ENCODE measurements at regions of chr7 and their contacts with region 1.

Region 1: GRCh38 chr7:128059143-128059988 is 28.1 kb upstream of the LRRC4 start:
- DNase-seq: peak; percentile 29
- H3K4me3 Mint-ChIP-seq: no peak overlapping the region
- H3K27ac Mint-ChIP-seq: no peak overlapping the region
- H3K4me1 Mint-ChIP-seq: peaks cover 49% of the 10 kb centered on the region
- H3K27me3 Mint-ChIP-seq: no peaks in the 10 kb centered on the region

Region 2: DNA sequence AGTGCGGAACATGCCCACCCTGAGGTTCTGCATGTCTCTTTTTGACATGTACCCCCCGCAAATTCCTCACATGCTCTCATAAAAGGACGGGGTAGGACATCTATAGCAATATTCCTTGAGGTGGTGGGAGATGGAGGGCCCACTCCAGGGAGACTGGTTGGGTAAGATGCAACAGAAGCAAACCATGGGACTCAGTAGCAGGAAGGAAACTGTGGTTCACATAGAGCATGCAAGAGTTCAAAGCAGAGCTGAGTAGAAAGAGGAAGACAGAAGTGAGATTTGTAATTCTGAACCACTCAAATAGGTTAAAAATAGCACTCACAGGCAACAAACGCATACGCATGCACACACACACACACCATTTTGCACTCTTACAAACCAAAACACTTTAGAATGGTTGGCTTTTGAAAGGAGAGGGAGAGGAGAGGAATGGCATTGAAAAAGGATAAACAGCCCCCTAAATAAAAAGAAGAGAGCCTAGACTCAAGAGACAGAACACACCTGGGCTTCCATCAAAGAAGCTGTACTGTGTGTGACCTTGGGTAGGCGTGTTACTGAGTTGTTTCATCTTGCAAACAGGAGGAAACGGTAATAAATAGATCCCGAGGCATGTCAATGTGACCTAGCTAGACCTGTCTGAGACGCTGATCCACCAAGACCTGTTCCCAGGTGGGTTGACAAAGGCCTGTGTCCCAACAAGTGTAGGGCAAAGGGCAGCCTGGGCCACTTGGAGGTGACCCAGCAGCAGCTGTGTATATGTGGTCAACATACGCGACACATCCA is 49.5 kb after region 1 on chr7:
- CTCF ChIA-PET with region 1: interaction called, 3 read pairs
- intact Hi-C with region 1: loop called (anchors 2 kb)
- DNase-seq: peak; percentile 45
- H3K4me3 Mint-ChIP-seq: no peak overlapping the region
- H3K27ac Mint-ChIP-seq: peak overlapping the region; percentile 62
- H3K4me1 Mint-ChIP-seq: peaks cover 66% of the 10 kb centered on the region
- H3K27me3 Mint-ChIP-seq: peaks cover under 1% of the 10 kb centered on the region

Measured in activated naive CD4-positive, alpha-beta T cell treated with anti-CD3 and anti-CD28 coated beads for 36 hours (primary cell).